Ascending aorta (tissue), 2 donors: ENCODE measurements at regions of chr22 and their contacts with region 1.

Region 1: DNA sequence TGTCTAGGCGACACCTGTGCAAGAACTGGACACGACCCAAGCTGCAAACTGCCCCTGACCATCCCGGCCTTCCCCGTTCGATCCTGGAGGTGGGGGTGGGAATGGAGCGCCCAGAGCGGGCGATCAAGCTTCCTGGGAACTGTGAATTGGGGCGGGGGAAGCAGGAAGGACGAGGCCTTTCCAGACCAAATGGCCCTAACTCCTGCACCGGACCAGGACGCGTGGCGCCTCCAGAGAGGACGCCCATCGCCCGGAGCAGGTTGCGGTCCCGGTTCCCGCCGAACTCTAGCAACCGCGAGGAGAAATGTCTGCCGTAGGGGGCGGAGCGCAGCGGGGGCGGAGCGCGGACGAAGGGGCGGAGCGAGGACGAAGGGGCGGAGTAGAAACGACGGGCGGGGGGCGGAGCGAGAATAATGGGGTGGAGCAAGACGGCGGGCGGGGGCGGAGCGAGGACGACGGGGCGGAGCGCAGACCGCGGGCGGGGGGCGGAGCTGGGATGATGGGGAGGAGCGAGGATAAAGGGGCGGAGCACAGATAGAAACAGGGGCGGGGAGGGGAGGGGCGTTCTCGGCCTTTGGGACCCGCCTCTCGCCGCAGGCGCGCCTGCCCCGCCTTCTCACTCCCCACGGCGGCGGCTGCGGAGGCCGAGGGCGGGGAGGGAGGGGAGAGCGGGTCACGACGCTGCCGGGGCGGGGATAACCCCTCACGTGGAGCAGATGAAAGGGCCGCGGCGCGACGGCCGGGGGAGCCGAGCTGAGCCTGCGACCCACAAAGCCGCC is at the start of gene ZNRF3:
- DNase-seq: peak; percentile 63 to 94
- H3K4me3 ChIP-seq: peak within 1 kb of the TSS; percentile 61 to 71
- H3K27ac ChIP-seq: peak within 1 kb of the TSS; percentile 45 to 83
- H3K4me1 ChIP-seq: peaks cover 0 to 15% of the 10 kb centered on the region in 2 donors
- H3K27me3 ChIP-seq: no peaks in the 10 kb centered on the region
- CTCF ChIP-seq: peak in 1 of 3 experiments; percentile 12
- total RNA-seq, gene ZNRF3: 49.1 TPM

Region 2: DNA sequence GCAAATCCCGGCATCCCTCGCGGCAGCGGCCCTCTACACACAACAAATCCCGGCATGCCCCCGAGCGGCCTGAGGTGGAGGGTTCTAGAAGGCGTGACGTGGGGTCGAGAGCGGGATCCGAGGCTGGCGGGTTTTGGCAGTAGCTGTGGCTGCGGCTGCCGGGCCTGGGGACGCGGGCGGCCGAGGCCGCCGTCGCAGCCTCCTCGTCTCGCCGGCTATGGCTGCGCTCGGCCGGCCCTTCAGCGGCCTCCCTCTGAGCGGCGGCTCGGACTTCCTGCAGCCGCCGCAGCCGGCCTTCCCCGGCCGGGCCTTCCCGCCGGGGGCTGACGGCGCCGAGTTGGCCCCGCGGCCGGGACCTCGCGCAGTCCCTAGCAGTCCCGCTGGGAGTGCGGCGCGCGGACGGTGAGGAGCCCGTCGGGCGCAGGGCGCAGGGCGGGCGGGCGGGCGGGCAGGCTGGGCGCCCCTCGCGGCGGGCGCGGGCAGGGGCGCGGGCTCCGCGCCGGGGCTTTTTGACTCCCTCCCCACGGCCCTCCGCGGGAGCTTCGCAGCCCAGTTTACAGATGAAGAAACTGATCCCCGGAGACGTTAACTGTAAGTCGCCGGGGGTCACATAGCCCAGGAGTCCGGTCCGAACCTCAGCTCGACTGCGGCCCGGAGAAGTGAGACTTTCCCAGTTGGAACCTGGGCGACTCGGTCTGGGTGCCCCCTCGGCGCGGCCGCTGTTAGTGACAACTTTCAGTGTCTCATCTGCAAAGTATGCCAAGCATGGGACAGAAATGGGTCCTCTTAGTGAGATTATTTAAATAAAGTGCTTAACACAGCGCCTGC is 110.2 kb before region 1 on chr22 and contains the start of gene CCDC117:
- intact Hi-C with region 1: loop called (anchors 1 kb)
- DNase-seq: peak; percentile 86 to 97
- H3K4me3 ChIP-seq: peak within 1 kb of the TSS; percentile 90
- H3K27ac ChIP-seq: peak within 1 kb of the TSS; percentile 95 to 98
- H3K4me1 ChIP-seq: peaks cover 3 to 10% of the 10 kb centered on the region in 2 donors
- H3K27me3 ChIP-seq: no peaks in the 10 kb centered on the region
- CTCF ChIP-seq: peak in 1 of 3 experiments; percentile 81
- total RNA-seq, gene CCDC117: 10.7 TPM

Region 3: DNA sequence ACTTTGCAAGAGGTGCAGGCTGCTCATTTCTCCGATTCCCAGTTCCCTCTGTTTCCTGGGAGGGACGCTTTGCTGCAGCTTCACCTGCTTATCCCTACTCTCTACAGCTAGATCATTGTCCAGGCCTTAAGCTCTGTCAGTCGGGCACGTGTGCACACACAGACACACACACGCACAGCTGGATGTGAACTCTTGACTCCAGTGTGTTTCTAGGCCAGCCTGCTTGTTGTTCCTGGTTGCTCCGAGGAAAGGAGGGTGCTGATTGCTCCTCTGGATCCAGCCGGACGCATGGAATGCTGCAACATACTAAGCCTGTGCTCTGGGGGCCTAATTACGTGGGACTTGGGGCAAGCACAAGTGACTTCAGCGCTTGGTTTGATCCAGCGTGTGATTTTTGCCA is 20.0 kb after region 1 on chr22:
- intact Hi-C with region 1: loop called (anchors 1 kb)
- DNase-seq: peak in 1 of 2 donors; percentile 77
- H3K4me3 ChIP-seq: peak overlapping the region in 1 of 2 donors; percentile 4
- H3K27ac ChIP-seq: peak overlapping the region; percentile 72 to 87
- H3K4me1 ChIP-seq: peaks cover 4 to 51% of the 10 kb centered on the region in 2 donors
- H3K27me3 ChIP-seq: no peaks in the 10 kb centered on the region
- CTCF ChIP-seq: no peak

Region 4: DNA sequence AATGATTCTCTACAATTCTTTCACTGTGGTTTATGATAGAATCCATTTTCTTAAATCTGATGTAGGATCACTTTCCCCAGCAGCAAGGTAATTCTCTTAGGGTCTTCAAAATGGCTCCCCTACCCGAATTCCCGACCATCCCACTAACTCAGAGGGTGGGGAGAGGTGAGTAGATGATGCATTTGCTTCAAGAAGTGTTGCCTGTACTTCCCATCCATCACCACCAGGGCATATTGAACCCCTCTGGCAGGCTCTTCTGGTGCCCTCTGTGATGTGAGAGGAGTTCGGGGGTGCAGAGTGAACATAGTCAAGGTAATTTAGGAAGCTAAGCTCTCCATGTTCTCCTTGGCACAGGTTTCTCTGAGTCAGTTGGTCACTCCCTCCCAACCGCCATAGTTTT is 52.6 kb after region 1 on chr22:
- intact Hi-C with region 1: loop called (anchors 10 kb)
- DNase-seq: peak in 1 of 2 donors; percentile 1
- H3K4me3 ChIP-seq: no peak overlapping the region
- H3K27ac ChIP-seq: peak overlapping the region; percentile 66 to 70
- H3K4me1 ChIP-seq: peaks cover 0 to 19% of the 10 kb centered on the region in 2 donors
- H3K27me3 ChIP-seq: no peaks in the 10 kb centered on the region
- CTCF ChIP-seq: no peak

Region 5: DNA sequence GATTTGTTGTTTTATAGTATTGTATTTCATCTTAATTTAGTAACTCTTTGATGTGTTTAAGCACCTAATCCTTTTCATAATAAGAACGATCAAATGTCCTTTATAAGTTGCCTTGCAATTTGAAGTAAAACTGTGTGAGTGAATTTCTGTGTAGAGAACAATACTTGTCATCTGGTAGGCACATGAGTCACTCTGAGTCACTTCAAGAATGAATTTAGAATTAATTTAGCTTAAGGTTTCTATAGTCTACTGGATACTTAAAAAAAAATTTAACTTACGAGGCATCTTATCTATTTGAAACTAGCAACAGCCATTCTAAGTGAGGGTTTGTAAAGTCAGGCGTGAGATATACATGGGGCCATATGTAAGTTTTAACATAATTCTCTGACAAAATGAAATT is 93.5 kb after region 1 on chr22:
- intact Hi-C with region 1: loop called (anchors 5 kb)
- DNase-seq: no peak
- H3K4me3 ChIP-seq: peak overlapping the region in 1 of 2 donors; percentile 41
- H3K27ac ChIP-seq: peak overlapping the region in 1 of 2 donors; percentile 53
- H3K4me1 ChIP-seq: peaks cover 6 to 20% of the 10 kb centered on the region in 2 donors
- H3K27me3 ChIP-seq: no peaks in the 10 kb centered on the region
- CTCF ChIP-seq: no peak